Activated T-helper 2 cell treated with anti-CD3 and anti-CD28 coated beads, Interferon-gamma antibody, Interleukin-2, Interleukin-4, amounts not matched to agents 10 μg/mL and 5 μg/mL and 100 μg/mL, durations not matched to agents 14 hours and 24 hours and 36 hours (primary cell): ENCODE measurements at regions of chr14 and their contacts with region 1.

Region 1: GRCh38 chr14:64465191-64465822 is at the start of gene AKAP5:
- DNase-seq: peak; percentile 56
- H3K4me3 Mint-ChIP-seq: peak within 1 kb of the TSS; percentile 84
- H3K27ac Mint-ChIP-seq: peak within 1 kb of the TSS; percentile 70
- H3K4me1 Mint-ChIP-seq: peaks cover 35% of the 10 kb centered on the region
- H3K27me3 Mint-ChIP-seq: no peaks in the 10 kb centered on the region
- total RNA-seq, gene AKAP5: 2.3 and 2.5 TPM in 2 replicates

Region 2: GRCh38 chr14:64089920-64090319 is 375.4 kb before region 1 on chr14:
- intact Hi-C with region 1: no loop called
- DNase-seq: no peak
- H3K4me3 Mint-ChIP-seq: no peak overlapping the region
- H3K27ac Mint-ChIP-seq: no peak overlapping the region
- H3K4me1 Mint-ChIP-seq: no peaks in the 10 kb centered on the region
- H3K27me3 Mint-ChIP-seq: no peaks in the 10 kb centered on the region

Region 3: DNA sequence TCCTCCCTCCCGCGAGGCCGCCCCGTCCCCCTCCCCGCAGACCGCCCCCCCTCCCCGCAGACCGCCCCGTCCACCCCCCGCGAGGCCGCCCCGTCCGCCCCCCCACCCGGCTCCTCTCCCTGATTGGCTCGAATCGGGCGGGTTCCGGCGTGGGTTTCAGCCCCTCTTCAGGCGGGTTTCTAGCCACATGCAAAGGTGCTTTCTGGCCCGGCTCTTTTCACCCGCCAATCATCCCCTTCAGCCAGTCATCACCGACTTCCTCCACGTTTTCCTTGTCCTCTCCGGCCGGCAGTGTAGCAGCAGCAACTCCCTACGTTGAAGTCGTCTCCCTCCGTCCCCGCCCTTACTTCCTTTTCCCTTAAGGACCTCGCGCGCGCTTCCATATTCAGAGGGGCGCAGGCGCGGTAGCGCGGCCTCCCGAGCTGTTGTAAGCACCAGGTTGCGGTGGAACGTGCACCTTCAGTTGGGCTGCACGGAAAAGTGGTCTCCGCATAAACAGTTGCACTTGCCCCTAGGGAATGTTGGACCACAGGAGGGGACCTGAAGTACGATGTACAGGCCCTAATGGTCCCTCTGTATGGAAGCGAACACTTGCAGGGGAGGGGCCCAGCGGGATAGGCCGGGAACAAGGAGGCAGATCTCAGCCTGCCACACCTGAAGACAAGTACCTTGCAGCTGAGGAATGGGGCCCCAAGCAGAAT is 126.5 kb before region 1 on chr14:
- intact Hi-C with region 1: loop called (anchors 5 kb)
- DNase-seq: peak; percentile 89
- H3K4me3 Mint-ChIP-seq: peak overlapping the region; percentile 91
- H3K27ac Mint-ChIP-seq: peak overlapping the region; percentile 80
- H3K4me1 Mint-ChIP-seq: peaks cover 23% of the 10 kb centered on the region
- H3K27me3 Mint-ChIP-seq: no peaks in the 10 kb centered on the region

Region 4: DNA sequence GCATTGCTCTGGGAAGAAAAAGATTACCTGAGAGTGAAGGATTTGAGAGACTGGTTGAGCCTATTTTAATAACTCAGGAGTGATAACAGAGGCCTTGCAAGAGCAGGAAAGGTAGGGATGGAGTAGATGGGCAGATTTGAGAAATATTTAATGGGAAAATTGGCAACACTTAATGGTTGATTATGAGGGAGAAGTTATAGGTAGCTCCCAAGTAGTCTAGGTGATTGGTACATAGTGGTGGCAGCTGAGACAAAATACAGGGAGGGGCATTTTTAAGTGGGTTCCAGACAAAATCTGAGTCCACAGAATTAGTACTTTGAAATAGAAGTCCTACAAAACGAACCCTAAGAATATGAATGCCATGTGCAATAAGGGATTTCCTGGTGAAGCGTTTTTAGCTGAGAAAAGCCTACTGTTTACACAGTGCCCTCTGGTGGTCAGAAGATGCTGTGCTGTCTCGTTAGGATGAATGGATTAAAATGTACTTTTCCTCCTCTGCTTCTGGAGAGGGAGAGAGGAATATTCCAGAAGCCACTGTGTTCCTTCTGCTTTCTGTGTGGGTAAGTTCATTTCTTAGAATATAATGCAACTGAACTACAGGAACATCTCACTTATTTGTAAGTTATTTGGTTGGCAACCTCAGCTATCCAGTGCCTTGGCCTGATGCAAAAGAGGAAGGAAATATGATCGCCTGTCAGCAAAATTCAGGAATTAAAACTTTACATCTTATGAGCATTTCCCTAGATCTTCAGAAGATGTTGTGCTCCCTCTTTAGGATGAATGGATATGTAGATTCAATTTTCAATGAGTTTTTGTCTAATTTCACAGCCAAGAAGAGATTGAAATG is 45.7 kb after region 1 on chr14:
- intact Hi-C with region 1: loop called (anchors 2 kb)
- DNase-seq: peak; percentile 51
- H3K4me3 Mint-ChIP-seq: peak overlapping the region; percentile 59
- H3K27ac Mint-ChIP-seq: peak overlapping the region; percentile 75
- H3K4me1 Mint-ChIP-seq: peaks cover 60% of the 10 kb centered on the region
- H3K27me3 Mint-ChIP-seq: no peaks in the 10 kb centered on the region

Region 5: DNA sequence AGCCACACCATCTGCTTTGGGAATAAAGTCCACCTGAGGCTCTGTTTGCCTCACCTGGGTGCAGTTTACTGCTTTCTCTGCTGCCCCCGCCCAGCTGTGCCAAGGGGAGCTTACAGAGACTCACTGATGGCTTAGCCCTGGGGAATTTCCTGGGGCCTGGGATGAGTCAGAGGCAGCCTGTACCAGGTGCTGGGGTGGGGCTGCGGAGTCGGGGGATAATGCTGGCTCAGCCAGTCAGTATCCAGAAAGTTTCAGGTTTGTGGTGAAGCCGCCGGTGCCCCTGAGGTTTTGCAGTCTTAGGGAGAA is 261.2 kb after region 1 on chr14:
- intact Hi-C with region 1: no loop called
- DNase-seq: no peak
- H3K4me3 Mint-ChIP-seq: no peak overlapping the region
- H3K27ac Mint-ChIP-seq: no peak overlapping the region
- H3K4me1 Mint-ChIP-seq: peaks cover 37% of the 10 kb centered on the region
- H3K27me3 Mint-ChIP-seq: no peaks in the 10 kb centered on the region